MCF 10A (cell line): ENCODE measurements at regions of chr10 and their contacts with region 1.

Region 1: DNA sequence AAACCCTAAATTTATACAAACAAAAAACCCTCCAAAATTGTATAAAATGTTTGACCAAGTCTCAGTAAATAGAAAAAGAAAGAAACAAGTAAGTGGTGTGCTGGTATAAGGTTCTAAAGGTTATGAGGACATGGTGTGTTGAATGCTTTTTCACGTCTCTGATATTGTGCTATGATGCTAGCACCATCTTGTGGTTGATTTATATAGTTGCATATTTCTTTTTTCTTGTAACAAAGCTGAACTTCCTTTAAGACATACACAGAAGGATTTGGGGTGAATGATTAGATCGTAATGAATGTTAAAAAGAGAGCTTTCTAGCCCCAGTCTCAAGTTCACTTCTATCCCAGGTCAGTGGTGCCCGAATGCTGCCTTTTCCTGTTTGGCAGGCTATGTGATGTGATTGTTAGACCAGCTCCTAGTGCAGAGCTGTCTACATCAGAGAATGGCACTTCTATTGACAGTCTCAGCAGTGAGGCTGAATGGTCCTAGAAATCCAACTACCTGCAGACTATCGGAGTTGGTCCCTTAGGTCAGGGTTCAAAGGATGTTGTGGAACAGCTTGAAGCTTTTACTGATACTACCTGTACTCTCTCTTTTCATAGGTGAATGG is 25.0 kb downstream of the VTI1A start:
- DNase-seq: peak; percentile 64
- H3K4me3 Mint-ChIP-seq: no peak overlapping the region
- H3K27ac Mint-ChIP-seq: no peak overlapping the region
- H3K4me1 Mint-ChIP-seq: no peaks in the 10 kb centered on the region
- H3K27me3 Mint-ChIP-seq: no peaks in the 10 kb centered on the region
- CTCF ChIP-seq: peak; percentile 56

Region 2: GRCh38 chr10:112461029-112461887 is 10.7 kb before region 1 on chr10:
- CTCF ChIA-PET with region 1: interaction called, 24 read pairs
- POLR2A ChIA-PET with region 1: interaction called, 3 read pairs
- intact Hi-C with region 1: no loop called
- DNase-seq: peak; percentile 63
- H3K4me3 Mint-ChIP-seq: no peak overlapping the region
- H3K27ac Mint-ChIP-seq: peak overlapping the region; percentile 50
- H3K4me1 Mint-ChIP-seq: peaks cover 8% of the 10 kb centered on the region
- H3K27me3 Mint-ChIP-seq: no peaks in the 10 kb centered on the region
- CTCF ChIP-seq: no peak

Region 3: DNA sequence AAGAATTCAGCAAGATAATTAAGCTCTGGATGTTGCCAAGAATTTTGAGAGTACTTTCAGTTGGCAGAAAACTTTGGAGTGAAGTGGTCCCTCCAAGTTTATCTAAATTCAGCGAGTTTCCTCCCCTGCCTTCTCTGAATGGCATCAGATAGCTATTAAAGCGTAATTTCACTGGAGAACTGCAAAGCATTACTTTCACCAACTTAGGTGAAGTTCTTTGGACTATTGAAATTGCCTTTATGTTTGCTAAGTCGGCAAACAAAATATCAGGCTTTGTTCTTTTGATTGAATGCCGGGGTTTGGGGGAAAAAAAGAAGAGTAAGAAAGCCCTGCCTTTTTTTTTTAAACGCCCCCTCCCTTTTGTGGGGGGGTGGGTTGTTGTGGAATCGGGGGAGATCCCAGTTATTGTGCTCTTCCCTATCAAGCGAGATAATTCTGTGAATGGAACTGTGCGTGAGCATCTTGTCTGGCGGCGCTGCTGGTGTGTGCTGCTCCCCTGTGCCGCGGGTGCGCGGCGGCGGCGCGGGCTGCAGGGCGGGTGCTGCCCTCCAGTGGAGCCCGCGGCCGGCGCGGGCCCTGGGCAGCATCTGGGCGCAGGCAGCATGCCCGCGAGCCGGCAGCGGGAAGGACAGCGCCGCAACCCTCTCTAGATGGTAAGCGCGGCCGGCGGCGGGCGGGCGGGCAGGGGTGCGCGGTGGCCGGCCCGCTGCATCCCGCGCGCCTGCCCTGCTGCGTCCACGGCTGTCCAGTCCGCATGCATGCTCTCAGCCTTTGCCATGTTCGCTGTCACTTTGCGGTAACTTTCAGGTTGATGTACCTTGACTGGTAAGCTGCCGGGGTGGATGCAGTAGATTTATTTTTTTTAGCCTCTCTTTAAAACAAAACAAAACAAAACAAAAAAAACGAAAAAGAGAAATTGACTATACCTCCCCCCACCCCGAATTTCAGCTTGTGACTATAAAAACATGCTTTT is 654.5 kb after region 1 on chr10:
- CTCF ChIA-PET with region 1: interaction called, 7 read pairs
- POLR2A ChIA-PET with region 1: no interaction called
- intact Hi-C with region 1: loop called (anchors 2 kb)
- DNase-seq: peak; percentile 71
- H3K4me3 Mint-ChIP-seq: peak overlapping the region; percentile 59
- H3K27ac Mint-ChIP-seq: no peak overlapping the region
- H3K4me1 Mint-ChIP-seq: peaks cover 7% of the 10 kb centered on the region
- H3K27me3 Mint-ChIP-seq: no peaks in the 10 kb centered on the region
- CTCF ChIP-seq: peak; percentile 78

Region 4: GRCh38 chr10:113521123-113521795 is 1049.3 kb after region 1 on chr10:
- CTCF ChIA-PET with region 1: interaction called, 7 read pairs
- POLR2A ChIA-PET with region 1: no interaction called
- intact Hi-C with region 1: loop called (anchors 2 kb)
- DNase-seq: peak; percentile 69
- H3K4me3 Mint-ChIP-seq: no peak overlapping the region
- H3K27ac Mint-ChIP-seq: no peak overlapping the region
- H3K4me1 Mint-ChIP-seq: no peaks in the 10 kb centered on the region
- H3K27me3 Mint-ChIP-seq: peaks cover 35% of the 10 kb centered on the region
- CTCF ChIP-seq: peak; percentile 96